Activated CD4-positive, alpha-beta T cell treated with anti-CD3 and anti-CD28 coated beads, Interleukin-2, amount 10 ng/mL, durations not matched to agents 24 days and 14 days (primary cell): ENCODE measurements at regions of chr15 and their contacts with region 1.

Region 1: DNA sequence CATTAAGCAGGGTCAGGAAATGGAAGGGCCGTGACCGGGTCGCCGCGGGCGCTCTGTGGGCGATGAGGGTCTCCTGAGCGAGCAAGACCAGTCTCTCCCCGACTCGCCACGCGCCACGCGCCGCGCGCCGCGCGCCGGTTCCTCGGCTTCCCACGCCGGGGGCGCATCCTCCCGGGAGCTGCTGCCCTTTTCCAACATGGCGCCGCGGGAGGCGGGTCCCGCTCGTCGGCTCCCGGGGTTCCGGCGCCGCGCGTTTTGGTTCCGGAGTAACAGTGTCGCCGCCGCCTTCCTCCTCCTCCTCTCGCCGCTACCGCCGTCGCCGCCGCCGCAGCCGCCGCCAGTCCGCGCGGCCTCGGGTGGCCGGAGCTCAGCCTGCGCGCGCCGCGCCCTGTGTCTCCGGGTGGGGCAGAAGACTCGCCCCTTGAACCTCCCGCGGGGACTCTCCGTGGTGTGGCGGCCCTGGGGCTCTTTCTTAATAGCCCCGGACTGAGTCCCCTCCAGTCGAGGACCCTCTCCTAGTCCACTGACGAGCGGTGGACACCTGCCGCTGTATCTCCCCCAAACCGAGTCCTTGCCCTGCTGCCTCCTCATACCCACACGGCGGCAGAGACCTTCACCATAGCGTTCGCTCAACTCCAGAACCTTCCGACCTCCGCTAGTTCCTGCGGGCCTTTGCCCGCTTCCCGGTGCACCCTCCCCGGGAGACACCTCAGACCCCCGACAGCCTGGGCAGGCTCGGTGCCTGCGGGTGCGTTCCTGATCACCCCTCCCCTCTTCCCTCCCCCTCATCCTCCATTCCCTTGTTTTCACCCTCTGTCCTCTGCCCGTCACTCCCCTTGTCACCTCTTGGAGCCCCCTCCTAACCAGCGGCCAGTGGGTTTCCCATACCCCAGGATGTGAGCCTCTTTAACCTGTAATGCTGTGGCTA is at the start of gene MAP2K5:
- DNase-seq: peak; percentile 97
- H3K4me3 Mint-ChIP-seq: peak within 1 kb of the TSS; percentile 94
- H3K27ac Mint-ChIP-seq: peak within 1 kb of the TSS; percentile 92
- H3K4me1 Mint-ChIP-seq: peaks cover 45% of the 10 kb centered on the region
- H3K27me3 Mint-ChIP-seq: no peaks in the 10 kb centered on the region
- total RNA-seq, gene MAP2K5: 21.0 and 25.1 TPM in 2 replicates

Region 2: GRCh38 chr15:67254238-67255175 is 288.2 kb before region 1 on chr15 and contains the starts of genes AAGAB and IQCH:
- intact Hi-C with region 1: loop called (anchors 5 kb)
- DNase-seq: peak; percentile 100
- H3K4me3 Mint-ChIP-seq: peak within 1 kb of the TSS; percentile 99
- H3K27ac Mint-ChIP-seq: peak within 1 kb of the TSS; percentile 98
- H3K4me1 Mint-ChIP-seq: peaks cover 28% of the 10 kb centered on the region
- H3K27me3 Mint-ChIP-seq: peaks cover 15% of the 10 kb centered on the region
- total RNA-seq, gene AAGAB: 44.9 and 48.6 TPM in 2 replicates
- total RNA-seq, gene IQCH: 0.70 and 1.6 TPM in 2 replicates

Region 3: GRCh38 chr15:67521029-67521811 is 21.5 kb before region 1 on chr15 and contains the start of gene C15orf61:
- intact Hi-C with region 1: loop called (anchors 1 kb)
- DNase-seq: peak; percentile 96
- H3K4me3 Mint-ChIP-seq: peak within 1 kb of the TSS; percentile 98
- H3K27ac Mint-ChIP-seq: peak within 1 kb of the TSS; percentile 99
- H3K4me1 Mint-ChIP-seq: peaks cover 25% of the 10 kb centered on the region
- H3K27me3 Mint-ChIP-seq: no peaks in the 10 kb centered on the region
- total RNA-seq, gene C15orf61: 4.7 and 7.3 TPM in 2 replicates

Region 4: DNA sequence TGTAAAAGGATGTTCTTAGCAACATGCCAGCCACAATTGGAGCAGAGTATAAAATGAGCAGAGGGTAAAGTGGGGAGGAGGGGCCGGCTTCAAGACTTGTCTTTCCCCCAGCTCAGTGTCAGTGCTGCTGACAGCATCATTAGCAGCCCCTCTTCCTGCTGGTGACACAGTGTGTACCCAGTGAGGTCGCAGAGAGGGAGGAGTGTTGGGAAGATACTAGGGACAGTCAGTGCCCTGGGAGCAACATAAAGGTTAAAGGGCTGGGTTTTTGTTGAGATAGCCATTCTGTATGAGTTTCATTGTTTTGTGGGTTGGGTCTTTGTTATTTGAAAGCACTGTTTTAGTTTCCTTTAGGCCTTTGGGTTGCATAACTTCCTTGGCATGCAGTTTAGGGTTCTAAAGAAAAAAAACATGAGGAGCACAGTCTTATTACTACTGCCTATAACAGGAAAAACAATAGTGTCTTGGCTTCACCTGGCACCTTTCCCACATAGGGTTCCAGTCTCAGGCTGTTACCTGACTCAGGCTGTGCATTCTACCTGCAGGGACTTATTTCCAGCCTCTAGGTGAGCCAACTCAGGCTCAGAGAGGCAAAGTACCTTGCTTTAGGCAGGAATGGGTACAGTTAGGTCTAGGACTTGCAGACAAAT is 188.6 kb after region 1 on chr15:
- intact Hi-C with region 1: no loop called
- DNase-seq: no peak
- H3K4me3 Mint-ChIP-seq: no peak overlapping the region
- H3K27ac Mint-ChIP-seq: no peak overlapping the region
- H3K4me1 Mint-ChIP-seq: peaks cover 15% of the 10 kb centered on the region
- H3K27me3 Mint-ChIP-seq: no peaks in the 10 kb centered on the region

Region 5: GRCh38 chr15:67762610-67763368 is 220.1 kb after region 1 on chr15:
- intact Hi-C with region 1: loop called (anchors 5 kb)
- DNase-seq: peak; percentile 84
- H3K4me3 Mint-ChIP-seq: peak overlapping the region; percentile 41
- H3K27ac Mint-ChIP-seq: peak overlapping the region; percentile 59
- H3K4me1 Mint-ChIP-seq: peaks cover 45% of the 10 kb centered on the region
- H3K27me3 Mint-ChIP-seq: no peaks in the 10 kb centered on the region

Region 6: DNA sequence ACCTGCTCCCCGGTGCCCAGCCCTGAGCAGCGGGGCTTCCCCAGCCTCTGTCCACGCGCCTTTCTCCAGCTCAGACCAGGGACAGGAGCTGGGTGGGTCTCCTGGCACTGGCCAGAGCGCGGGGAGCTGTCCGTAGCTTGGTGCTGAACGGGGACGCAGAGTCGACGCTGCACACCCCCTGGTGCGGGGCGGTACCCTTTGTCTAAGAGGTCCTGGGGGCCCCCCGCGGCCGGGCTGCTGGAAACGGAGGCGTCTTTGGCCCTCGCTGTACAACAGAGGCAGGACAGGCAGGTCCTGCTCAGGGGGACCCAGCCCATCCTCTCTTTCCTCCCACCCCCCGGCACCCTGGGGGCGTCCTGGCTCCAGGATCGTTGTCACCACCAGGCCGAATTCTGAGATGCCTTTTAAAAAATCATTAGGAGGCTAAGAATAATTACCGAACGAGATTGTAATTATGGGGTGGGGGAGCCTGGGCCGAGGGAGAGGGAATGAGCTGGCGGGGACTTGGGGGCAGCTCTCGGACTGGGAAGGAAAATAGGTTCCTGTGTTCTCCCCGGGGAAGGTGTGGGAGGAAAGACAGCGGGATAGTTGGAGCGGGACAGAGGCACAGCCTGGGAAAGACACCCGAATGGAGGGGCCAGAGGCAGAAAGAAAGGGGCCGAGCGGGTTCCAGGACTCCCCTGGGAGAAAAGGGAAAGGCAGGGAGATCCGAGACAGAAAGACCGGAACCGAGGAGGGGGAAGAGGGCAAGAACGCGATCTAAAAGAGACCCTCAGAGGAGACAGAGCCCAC is 278.5 kb after region 1 on chr15:
- intact Hi-C with region 1: loop called (anchors 5 kb)
- DNase-seq: peak; percentile 78
- H3K4me3 Mint-ChIP-seq: peak overlapping the region; percentile 15
- H3K27ac Mint-ChIP-seq: peak overlapping the region; percentile 62
- H3K4me1 Mint-ChIP-seq: peaks cover 20% of the 10 kb centered on the region
- H3K27me3 Mint-ChIP-seq: peaks cover 85% of the 10 kb centered on the region